ENCODE measurements at regions of chr7 and their contacts with region 1.

Region 1: GRCh38 chr7:151368136-151368571 is 26.5 kb downstream of the NUB1 start:
- DNase-seq: peak; percentile 69
- ATAC-seq: peak; percentile 81
- H3K4me3 ChIP-seq: no peak overlapping the region
- H3K27ac ChIP-seq: no peak overlapping the region
- H3K4me1 ChIP-seq: peaks cover 15% of the 10 kb centered on the region
- H3K27me3 ChIP-seq: no peaks in the 10 kb centered on the region
- CTCF ChIP-seq: peak; percentile 87
- POLR2A ChIP-seq: no peak
- RAD21 ChIP-seq: peak; percentile 84

Region 2: DNA sequence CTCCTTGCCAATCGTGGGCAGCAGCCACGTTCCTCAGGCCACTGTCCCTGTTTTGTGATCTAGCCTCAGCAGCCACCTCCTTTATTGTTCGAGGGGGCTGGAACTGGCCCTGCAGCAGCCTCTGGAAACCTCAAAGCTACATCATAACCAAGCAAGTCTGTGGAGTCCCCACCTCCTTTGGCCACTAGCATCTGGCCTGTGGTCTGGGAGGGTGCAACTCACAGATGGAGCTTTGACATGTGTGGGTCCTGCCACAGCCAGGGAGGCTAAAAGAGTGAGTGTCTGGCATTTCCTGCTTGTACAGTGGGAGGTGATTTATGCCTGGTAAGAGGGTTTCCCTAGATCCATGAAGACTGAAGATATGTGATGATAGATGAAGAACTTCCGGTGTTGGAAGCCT is 58.8 kb before region 1 on chr7:
- CTCF ChIA-PET with region 1: no interaction called
- POLR2A ChIA-PET with region 1: no interaction called
- dilution Hi-C with region 1: no loop called
- in situ Hi-C with region 1: no loop called
- intact Hi-C with region 1: no loop called
- DNase-seq: peak; percentile 80
- ATAC-seq: peak; percentile 63
- H3K4me3 ChIP-seq: no peak overlapping the region
- H3K27ac ChIP-seq: no peak overlapping the region
- H3K4me1 ChIP-seq: peaks cover 14% of the 10 kb centered on the region; the same call in 1 of the 2 replicates
- H3K27me3 ChIP-seq: no peaks in the 10 kb centered on the region; the same call in 1 of the 2 replicates
- CTCF ChIP-seq: no peak
- POLR2A ChIP-seq: no peak
- RAD21 ChIP-seq: no peak

Region 3: DNA sequence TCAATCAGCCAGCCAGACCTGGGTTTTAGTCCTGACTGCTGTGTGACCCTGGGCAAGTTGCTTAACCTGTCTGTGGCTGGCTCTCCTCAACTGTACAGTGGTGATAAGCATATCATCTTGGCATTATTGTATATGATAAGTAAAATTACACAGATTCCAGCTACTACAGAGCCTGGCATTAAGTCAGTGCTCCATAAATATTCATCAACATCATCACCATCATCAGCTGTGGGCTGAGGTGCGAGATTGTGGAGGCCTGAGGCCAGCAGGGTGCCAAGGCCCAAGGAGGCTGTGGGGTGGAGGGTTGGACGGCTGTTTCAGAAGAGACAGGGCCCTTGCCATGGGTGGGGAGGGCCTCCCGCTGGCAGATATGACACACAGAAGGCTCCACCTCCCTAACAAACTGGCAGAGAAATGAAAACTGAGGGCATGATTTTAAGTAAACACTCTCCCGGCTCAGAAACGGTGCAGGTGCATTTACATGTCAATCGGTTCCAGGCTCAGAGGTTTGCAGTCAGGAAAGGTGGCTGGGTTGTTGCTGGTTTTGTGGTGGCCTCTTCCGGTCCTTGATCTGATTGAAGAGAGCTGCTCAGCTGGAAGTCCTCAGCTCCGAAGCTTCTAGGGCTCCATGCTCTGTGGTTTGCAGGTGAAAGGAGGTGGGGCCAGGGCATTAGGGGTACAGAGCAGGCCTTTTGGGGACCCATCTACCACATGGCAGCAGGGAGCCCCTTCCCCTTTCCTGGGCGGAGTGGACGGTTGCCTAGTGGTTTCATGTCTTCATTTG is 61.6 kb after region 1 on chr7:
- CTCF ChIA-PET with region 1: no interaction called
- POLR2A ChIA-PET with region 1: no interaction called
- dilution Hi-C with region 1: no loop called
- in situ Hi-C with region 1: no loop called
- intact Hi-C with region 1: loop called (anchors 5 kb)
- DNase-seq: peak; percentile 7
- ATAC-seq: no peak
- H3K4me3 ChIP-seq: no peak overlapping the region
- H3K27ac ChIP-seq: no peak overlapping the region
- H3K4me1 ChIP-seq: peaks cover 36% of the 10 kb centered on the region
- H3K27me3 ChIP-seq: no peaks in the 10 kb centered on the region
- CTCF ChIP-seq: no peak
- POLR2A ChIP-seq: no peak
- RAD21 ChIP-seq: no peak

Region 4: GRCh38 chr7:151448261-151449252 is 80.4 kb after region 1 on chr7:
- CTCF ChIA-PET with region 1: interaction called, 12 read pairs
- POLR2A ChIA-PET with region 1: no interaction called
- dilution Hi-C with region 1: no loop called
- in situ Hi-C with region 1: loop called (anchors 5 kb)
- intact Hi-C with region 1: loop called (anchors 1 kb)
- DNase-seq: peak; percentile 41
- ATAC-seq: peak; percentile 96
- H3K4me3 ChIP-seq: peak overlapping the region; percentile 36
- H3K27ac ChIP-seq: no peak overlapping the region
- H3K4me1 ChIP-seq: no peaks in the 10 kb centered on the region; the same call in 1 of the 2 replicates
- H3K27me3 ChIP-seq: no peaks in the 10 kb centered on the region; the same call in none of the 2 replicates
- CTCF ChIP-seq: peak; percentile 93
- POLR2A ChIP-seq: no peak
- RAD21 ChIP-seq: peak; percentile 82

Region 5: GRCh38 chr7:151759591-151760042 is 391.5 kb after region 1 on chr7:
- CTCF ChIA-PET with region 1: interaction called, 4 read pairs
- POLR2A ChIA-PET with region 1: no interaction called
- dilution Hi-C with region 1: no loop called
- in situ Hi-C with region 1: loop called (anchors 25 kb)
- intact Hi-C with region 1: loop called (anchors 1 kb)
- DNase-seq: peak; percentile 65
- ATAC-seq: peak; percentile 59
- H3K4me3 ChIP-seq: no peak overlapping the region
- H3K27ac ChIP-seq: no peak overlapping the region
- H3K4me1 ChIP-seq: peaks cover 30% of the 10 kb centered on the region
- H3K27me3 ChIP-seq: peaks cover 32% of the 10 kb centered on the region
- CTCF ChIP-seq: peak; percentile 88
- POLR2A ChIP-seq: no peak
- RAD21 ChIP-seq: peak; percentile 96

Measured in IMR-90 (cell line).